ENCODE measurements at regions of chr5 and their contacts with region 1.

Region 1: GRCh38 chr5:138132543-138132942 is 6.7 kb downstream of the NME5 start:
- DNase-seq: no peak
- H3K4me3 ChIP-seq: no peak overlapping the region
- H3K4me3 Mint-ChIP-seq: no peak overlapping the region
- H3K27ac ChIP-seq: no peak overlapping the region
- H3K27ac Mint-ChIP-seq: no peak overlapping the region
- H3K4me1 ChIP-seq: peaks cover 0 to 6% of the 10 kb centered on the region in 2 donors
- H3K4me1 Mint-ChIP-seq: peaks cover 7% of the 10 kb centered on the region
- H3K27me3 ChIP-seq: peaks cover 5 to 10% of the 10 kb centered on the region in 2 donors
- H3K27me3 Mint-ChIP-seq: peaks cover 5 to 31% (median 12%) of the 10 kb centered on the region in 3 donors
- CTCF ChIP-seq: no peak

Region 2: DNA sequence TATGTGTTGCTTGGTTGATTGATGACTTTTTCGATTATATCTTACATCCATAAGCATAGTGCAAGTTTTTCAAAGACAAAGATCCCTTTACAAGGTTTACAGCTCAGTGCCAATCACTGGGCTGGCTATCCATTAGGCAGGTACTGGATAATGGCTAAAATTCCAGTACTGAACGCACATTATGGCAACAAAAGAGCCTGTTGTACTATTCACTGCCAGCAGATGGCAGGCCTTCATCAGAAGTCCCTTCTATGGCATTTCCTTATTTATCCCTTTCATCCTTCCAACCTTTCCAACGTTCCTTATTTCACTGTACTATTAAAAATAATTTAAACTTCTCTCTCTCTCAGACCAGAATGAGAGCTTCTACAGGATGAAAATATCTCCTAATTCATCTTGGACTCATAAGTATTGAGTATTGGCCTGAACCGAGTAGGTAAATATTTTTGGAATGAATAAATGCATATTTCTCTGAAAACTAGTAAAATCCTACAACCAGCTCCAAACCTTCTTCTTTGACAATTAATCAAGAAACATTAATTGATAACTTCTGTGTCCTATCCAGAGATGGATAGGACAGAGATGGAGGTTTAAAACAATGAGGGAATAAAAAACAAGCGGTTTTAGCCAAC is 55.4 kb before region 1 on chr5:
- intact Hi-C with region 1: loop called (anchors 2 kb)
- DNase-seq: peak; percentile 32 to 68 (median 58)
- H3K4me3 ChIP-seq: no peak overlapping the region
- H3K4me3 Mint-ChIP-seq: no peak overlapping the region
- H3K27ac ChIP-seq: no peak overlapping the region
- H3K27ac Mint-ChIP-seq: no peak overlapping the region
- H3K4me1 ChIP-seq: peaks cover 8% of the 10 kb centered on the region in 2 donors
- H3K4me1 Mint-ChIP-seq: peaks cover 11% of the 10 kb centered on the region
- H3K27me3 ChIP-seq: no peaks in the 10 kb centered on the region
- H3K27me3 Mint-ChIP-seq: peaks cover 2 to 5% (median 2%) of the 10 kb centered on the region in 3 donors
- CTCF ChIP-seq: peak; percentile 93

Region 3: DNA sequence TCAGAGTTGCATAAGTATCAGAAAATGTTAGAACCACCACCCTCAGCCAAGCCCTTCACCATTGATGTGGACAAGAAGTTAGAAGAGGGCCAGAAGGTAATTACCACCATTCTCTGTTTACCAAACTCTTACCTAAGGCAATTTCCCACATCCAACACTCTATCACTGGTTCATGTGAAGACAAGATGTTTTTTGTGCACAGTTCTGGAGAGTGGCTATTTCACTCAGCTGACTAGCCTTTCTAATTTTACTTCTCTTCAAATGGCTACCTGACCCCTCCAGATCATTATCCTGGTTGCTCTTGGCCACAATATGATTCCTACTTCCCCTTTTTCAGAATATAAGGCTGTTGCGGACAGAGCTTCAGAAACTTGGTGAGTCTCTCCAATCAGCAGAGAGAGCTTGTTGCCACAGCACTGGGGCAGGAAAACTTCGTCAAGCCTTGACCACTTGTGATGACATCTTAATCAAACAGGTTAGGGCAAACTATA is 53.5 kb after region 1 on chr5:
- intact Hi-C with region 1: no loop called
- DNase-seq: peak in 1 of 3 donors; percentile 23
- H3K4me3 ChIP-seq: no peak overlapping the region
- H3K4me3 Mint-ChIP-seq: no peak overlapping the region
- H3K27ac ChIP-seq: peak overlapping the region in 1 of 2 donors; percentile 27
- H3K27ac Mint-ChIP-seq: peak overlapping the region in 5 of 7 donors; percentile 20 to 73 (median 58)
- H3K4me1 ChIP-seq: peaks cover 6 to 7% of the 10 kb centered on the region in 2 donors
- H3K4me1 Mint-ChIP-seq: peaks cover 14% of the 10 kb centered on the region
- H3K27me3 ChIP-seq: no peaks in the 10 kb centered on the region
- H3K27me3 Mint-ChIP-seq: peaks cover 0 to 2% (median 2%) of the 10 kb centered on the region in 3 donors
- CTCF ChIP-seq: no peak

Measured in CD14-positive monocyte (primary cell).